GM12878 (cell line): ENCODE measurements at regions of chr3 and their contacts with region 1.

Region 1: GRCh38 chr3:98763076-98763475 is at the start of gene ST3GAL6:
- DNase-seq: no peak
- ATAC-seq: peak; percentile 67
- H3K4me3 ChIP-seq: peak within 1 kb of the TSS; percentile 35; the same call in 1 of the 2 replicates
- H3K27ac ChIP-seq: peak within 1 kb of the TSS; percentile 5; the same call in 1 of the 2 replicates
- H3K4me1 ChIP-seq: peaks cover 29% of the 10 kb centered on the region
- H3K27me3 ChIP-seq: no peaks in the 10 kb centered on the region
- CTCF ChIP-seq: no peak
- EP300 ChIP-seq: no peak
- POLR2A ChIP-seq: 0 out of 2 replicates have a peak, but pooled peaks have one; percentile 34
- RAD21 ChIP-seq: no peak
- polyA plus RNA-seq, gene ST3GAL6: 19.5 to 31.4 TPM

Region 2: DNA sequence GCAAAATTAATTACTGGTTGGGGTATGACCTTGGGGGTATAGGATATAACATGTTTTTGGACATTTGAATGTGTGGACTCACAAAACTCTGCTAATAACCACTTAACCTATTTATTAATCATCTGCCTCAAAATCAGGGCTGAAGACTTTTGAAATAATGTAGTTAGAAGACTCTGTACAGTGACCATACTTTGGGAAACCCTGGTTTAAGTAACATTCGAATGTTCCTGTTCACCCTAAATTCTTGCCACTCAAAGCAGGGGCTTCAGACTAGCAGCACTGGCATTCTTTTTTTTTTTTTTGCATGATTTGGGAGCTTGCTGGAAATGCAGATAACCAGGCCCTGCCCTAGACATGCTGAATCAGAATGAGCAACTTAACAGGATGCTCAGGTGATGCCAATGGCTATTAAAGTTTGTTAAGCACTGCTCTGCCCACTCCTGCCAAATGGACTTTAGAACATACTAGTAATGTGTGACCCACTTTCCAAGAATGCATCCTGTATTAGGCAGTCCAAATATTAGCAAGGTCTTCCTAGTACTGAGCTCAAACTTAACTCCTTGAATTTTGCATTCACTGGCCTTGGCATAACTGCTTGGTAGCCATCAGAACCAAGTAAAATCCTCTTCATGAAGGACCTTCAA is 12.7 kb before region 1 on chr3:
- CTCF ChIA-PET with region 1: interaction called, 8 read pairs
- POLR2A ChIA-PET with region 1: interaction called, 49 read pairs
- RAD21 ChIA-PET with region 1: interaction called, 9 read pairs
- SMC1A ChIA-PET with region 1: interaction called, 139 read pairs
- in situ Hi-C with region 1: no loop called
- intact Hi-C with region 1: no loop called
- DNase-seq: no peak
- ATAC-seq: peak; percentile 39
- H3K4me3 ChIP-seq: no peak overlapping the region
- H3K27ac ChIP-seq: no peak overlapping the region
- H3K4me1 ChIP-seq: peaks cover 3% of the 10 kb centered on the region; the same call in 1 of the 2 replicates
- H3K27me3 ChIP-seq: no peaks in the 10 kb centered on the region
- CTCF ChIP-seq: no peak
- EP300 ChIP-seq: no peak
- POLR2A ChIP-seq: no peak
- RAD21 ChIP-seq: no peak

Region 3: GRCh38 chr3:98778852-98779413 is 15.9 kb after region 1 on chr3:
- CTCF ChIA-PET with region 1: interaction called, 3 read pairs
- POLR2A ChIA-PET with region 1: interaction called, 4 read pairs
- RAD21 ChIA-PET with region 1: interaction called, 3 read pairs
- SMC1A ChIA-PET with region 1: interaction called, 15 read pairs
- in situ Hi-C with region 1: no loop called
- intact Hi-C with region 1: no loop called
- DNase-seq: no peak
- ATAC-seq: peak; percentile 19; the same call in 2 of the 3 replicates
- H3K4me3 ChIP-seq: no peak overlapping the region
- H3K27ac ChIP-seq: no peak overlapping the region
- H3K4me1 ChIP-seq: peaks cover 4% of the 10 kb centered on the region
- H3K27me3 ChIP-seq: no peaks in the 10 kb centered on the region
- CTCF ChIP-seq: no peak
- EP300 ChIP-seq: no peak
- POLR2A ChIP-seq: no peak
- RAD21 ChIP-seq: no peak